SK-N-SH (cell line): ENCODE measurements at regions of chr9 and their contacts with region 1.

Region 1: GRCh38 chr9:137064027-137064879 is 6.1 kb downstream of the SAPCD2 start:
- DNase-seq: peak; percentile 89
- H3K4me3 ChIP-seq: no peak overlapping the region; a peak in 1 of 4 replicates
- H3K27ac ChIP-seq: peak overlapping the region in 1 of 2 experiments; percentile 11; a peak in 1 of 4 replicates
- H3K4me1 ChIP-seq: peaks cover 0 to 18% of the 10 kb centered on the region in 2 experiments; a peak in 1 of 4 replicates
- H3K27me3 ChIP-seq: no peaks in the 10 kb centered on the region
- CTCF ChIP-seq: peak; percentile 85
- EP300 ChIP-seq: no peak
- RAD21 ChIP-seq: peak; percentile 74

Region 2: DNA sequence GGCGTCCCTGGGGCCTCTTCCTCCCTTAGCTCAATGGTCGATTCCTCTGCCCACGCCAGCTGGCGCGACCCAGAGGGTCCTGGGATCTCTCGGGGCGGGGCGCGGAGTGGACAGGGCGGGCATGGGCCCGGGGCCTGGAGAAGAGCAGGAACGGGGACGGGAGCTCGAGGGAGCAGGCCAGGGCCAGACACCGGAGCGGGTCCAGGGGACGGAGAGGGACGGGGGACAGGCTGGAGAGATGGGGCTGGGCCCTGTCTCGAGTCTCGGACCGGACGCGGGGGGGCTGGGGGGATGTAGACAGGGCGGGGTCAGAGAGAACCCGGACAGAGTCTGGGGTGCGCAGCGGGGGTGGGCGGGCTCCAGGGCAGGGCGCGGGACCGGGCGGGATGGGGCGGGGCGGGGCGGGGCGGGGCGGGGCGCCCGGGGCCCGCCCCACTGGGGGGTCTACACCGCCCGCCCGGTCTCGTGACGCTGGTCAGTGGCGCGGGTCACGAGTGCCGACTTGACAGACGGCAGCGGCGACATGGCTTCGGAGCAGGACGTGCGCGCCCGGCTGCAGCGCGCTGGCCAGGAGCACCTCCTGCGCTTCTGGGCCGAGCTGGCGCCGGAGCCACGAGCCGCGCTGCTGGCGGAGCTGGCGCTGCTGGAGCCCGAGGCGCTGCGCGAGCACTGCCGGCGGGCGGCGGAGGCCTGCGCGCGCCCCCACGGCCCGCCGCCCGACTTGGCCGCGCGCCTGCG is 12.9 kb after region 1 on chr9 and contains the start of gene UAP1L1:
- CTCF ChIA-PET with region 1: interaction called, 803 read pairs
- POLR2A ChIA-PET with region 1: no interaction called
- DNase-seq: peak; percentile 85
- H3K4me3 ChIP-seq: peak within 1 kb of the TSS; percentile 57 to 60
- H3K27ac ChIP-seq: no peak within 1 kb of the TSS
- H3K4me1 ChIP-seq: peaks cover 0 to 11% of the 10 kb centered on the region in 2 experiments; a peak in 1 of 4 replicates
- H3K27me3 ChIP-seq: no peaks in the 10 kb centered on the region
- CTCF ChIP-seq: no peak
- EP300 ChIP-seq: no peak
- RAD21 ChIP-seq: no peak
- polyA plus RNA-seq, gene UAP1L1: 3.2 and 5.6 TPM in 2 replicates

Region 3: GRCh38 chr9:137086531-137087408 is 22.5 kb after region 1 on chr9 and contains the start of gene MAN1B1:
- CTCF ChIA-PET with region 1: interaction called, 17 read pairs
- POLR2A ChIA-PET with region 1: interaction called, 21 read pairs
- DNase-seq: peak; percentile 98
- H3K4me3 ChIP-seq: peak within 1 kb of the TSS; percentile 80 to 93
- H3K27ac ChIP-seq: peak within 1 kb of the TSS; percentile 57 to 88
- H3K4me1 ChIP-seq: peaks cover 13 to 21% of the 10 kb centered on the region in 2 experiments
- H3K27me3 ChIP-seq: no peaks in the 10 kb centered on the region
- CTCF ChIP-seq: no peak
- EP300 ChIP-seq: no peak
- RAD21 ChIP-seq: no peak
- polyA plus RNA-seq, gene MAN1B1: 57.8 and 61.9 TPM in 2 replicates